Activated CD4-positive, alpha-beta memory T cell treated with anti-CD3 and anti-CD28 coated beads for 36 hours (primary cell): ENCODE measurements at regions of chr11 and their contacts with region 1.

Region 1: GRCh38 chr11:77091146-77091940 is 11.3 kb upstream of the OMP start:
- DNase-seq: peak; percentile 86
- H3K4me3 Mint-ChIP-seq: no peak overlapping the region
- H3K27ac Mint-ChIP-seq: no peak overlapping the region
- H3K4me1 Mint-ChIP-seq: peaks cover 2% of the 10 kb centered on the region
- H3K27me3 Mint-ChIP-seq: no peaks in the 10 kb centered on the region

Region 2: GRCh38 chr11:76807206-76807875 is 284.0 kb before region 1 on chr11:
- CTCF ChIA-PET with region 1: interaction called, 26 read pairs
- POLR2A ChIA-PET with region 1: no interaction called
- intact Hi-C with region 1: loop called (anchors 5 kb)
- DNase-seq: peak; percentile 81
- H3K4me3 Mint-ChIP-seq: no peak overlapping the region
- H3K27ac Mint-ChIP-seq: no peak overlapping the region
- H3K4me1 Mint-ChIP-seq: peaks cover 32% of the 10 kb centered on the region
- H3K27me3 Mint-ChIP-seq: peaks cover 22% of the 10 kb centered on the region

Region 3: GRCh38 chr11:77047007-77047927 is 44.1 kb before region 1 on chr11:
- CTCF ChIA-PET with region 1: interaction called, 92 read pairs
- POLR2A ChIA-PET with region 1: no interaction called
- intact Hi-C with region 1: loop called (anchors 1 kb)
- DNase-seq: peak; percentile 81
- H3K4me3 Mint-ChIP-seq: peak overlapping the region; percentile 62
- H3K27ac Mint-ChIP-seq: peak overlapping the region; percentile 51
- H3K4me1 Mint-ChIP-seq: peaks cover 13% of the 10 kb centered on the region
- H3K27me3 Mint-ChIP-seq: peaks cover 6% of the 10 kb centered on the region

Region 4: DNA sequence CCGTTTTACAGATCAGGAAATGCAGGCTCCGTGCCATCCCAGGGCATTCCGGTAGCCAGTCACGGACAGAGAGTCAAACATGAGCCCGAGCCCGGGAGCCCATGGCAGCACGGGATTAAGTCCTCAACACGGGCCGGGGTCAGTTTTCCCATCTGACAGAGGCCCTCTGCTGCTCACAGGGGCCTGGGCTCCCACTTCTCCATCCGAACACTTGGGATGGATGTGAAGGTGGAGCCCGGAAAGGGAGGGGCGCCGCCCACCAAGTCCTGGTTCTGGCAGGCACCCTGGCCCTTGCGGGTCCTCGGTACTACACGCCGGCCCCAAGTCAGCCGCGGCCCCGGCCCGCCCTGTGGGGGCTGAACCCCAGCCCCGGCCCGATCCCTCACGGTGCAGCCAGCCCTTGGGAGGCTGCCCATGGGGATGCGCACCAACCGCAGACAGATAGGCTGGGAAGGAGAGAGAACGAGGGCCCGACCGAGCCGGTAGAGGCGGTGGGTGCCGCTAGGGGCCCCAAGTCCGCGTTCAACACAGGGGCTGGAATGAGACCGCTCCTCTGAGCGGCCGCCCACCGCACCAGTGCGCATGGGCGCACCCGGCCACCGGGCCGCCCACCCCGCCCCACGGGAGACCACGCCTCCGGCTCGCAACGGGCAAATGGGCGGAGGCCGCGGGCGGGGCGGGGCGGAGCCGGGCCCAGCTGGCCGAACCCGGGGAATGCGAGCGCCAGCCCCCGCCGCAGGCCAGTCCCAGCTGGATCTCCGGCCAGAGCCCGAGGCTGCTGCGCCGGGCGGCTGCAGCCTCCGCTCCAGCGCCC is 24.9 kb before region 1 on chr11 and contains the start of gene CAPN5:
- CTCF ChIA-PET with region 1: interaction called, 25 read pairs
- POLR2A ChIA-PET with region 1: no interaction called
- intact Hi-C with region 1: loop called (anchors 1 kb)
- DNase-seq: peak; percentile 88
- H3K4me3 Mint-ChIP-seq: peak within 1 kb of the TSS; percentile 71
- H3K27ac Mint-ChIP-seq: no peak within 1 kb of the TSS
- H3K4me1 Mint-ChIP-seq: peaks cover 4% of the 10 kb centered on the region
- H3K27me3 Mint-ChIP-seq: no peaks in the 10 kb centered on the region
- total RNA-seq, gene CAPN5: 0.88 to 1.1 TPM

Region 5: GRCh38 chr11:77127232-77127911 is 36.0 kb after region 1 on chr11:
- CTCF ChIA-PET with region 1: interaction called, 12 read pairs
- POLR2A ChIA-PET with region 1: no interaction called
- intact Hi-C with region 1: no loop called
- DNase-seq: peak; percentile 67
- H3K4me3 Mint-ChIP-seq: peak overlapping the region; percentile 29
- H3K27ac Mint-ChIP-seq: no peak overlapping the region
- H3K4me1 Mint-ChIP-seq: peaks cover 5% of the 10 kb centered on the region
- H3K27me3 Mint-ChIP-seq: peaks cover 2% of the 10 kb centered on the region

Region 6: DNA sequence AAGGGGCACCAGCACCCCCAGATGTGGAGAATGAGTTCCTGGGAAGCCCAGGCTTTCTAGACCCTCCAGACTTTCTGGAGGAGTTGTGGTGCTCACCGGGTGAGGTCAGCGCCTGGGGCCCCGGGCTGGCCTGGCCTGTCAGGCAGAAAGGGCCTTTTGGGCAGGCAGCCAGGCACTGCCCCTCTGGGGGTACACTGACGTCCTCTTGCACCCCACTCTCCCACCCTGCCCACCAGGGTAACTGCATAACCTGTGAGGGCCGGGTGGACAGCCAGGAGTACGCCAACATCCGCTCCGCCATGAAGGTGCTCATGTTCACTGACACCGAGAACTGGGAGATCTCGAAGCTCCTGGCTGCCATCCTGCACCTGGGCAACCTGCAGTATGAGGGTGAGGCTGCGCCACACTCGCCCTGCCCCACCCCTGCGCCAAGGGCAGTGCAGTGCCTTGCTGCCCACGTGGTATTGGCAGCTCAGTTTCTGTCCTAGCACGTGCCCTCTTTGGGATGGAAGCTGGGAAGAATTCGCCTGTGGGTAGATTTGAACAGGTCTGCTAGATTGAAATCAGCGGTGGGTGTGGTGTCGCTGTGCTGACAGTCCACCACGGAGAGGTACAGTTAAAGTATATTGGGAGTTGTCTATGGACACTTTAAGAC is 66.8 kb after region 1 on chr11:
- CTCF ChIA-PET with region 1: no interaction called
- POLR2A ChIA-PET with region 1: no interaction called
- intact Hi-C with region 1: no loop called
- DNase-seq: no peak
- H3K4me3 Mint-ChIP-seq: no peak overlapping the region
- H3K27ac Mint-ChIP-seq: no peak overlapping the region
- H3K4me1 Mint-ChIP-seq: peaks cover 6% of the 10 kb centered on the region
- H3K27me3 Mint-ChIP-seq: no peaks in the 10 kb centered on the region